K562 (cell line): ENCODE measurements at regions of chr15 and their contacts with region 1.

Region 1: DNA sequence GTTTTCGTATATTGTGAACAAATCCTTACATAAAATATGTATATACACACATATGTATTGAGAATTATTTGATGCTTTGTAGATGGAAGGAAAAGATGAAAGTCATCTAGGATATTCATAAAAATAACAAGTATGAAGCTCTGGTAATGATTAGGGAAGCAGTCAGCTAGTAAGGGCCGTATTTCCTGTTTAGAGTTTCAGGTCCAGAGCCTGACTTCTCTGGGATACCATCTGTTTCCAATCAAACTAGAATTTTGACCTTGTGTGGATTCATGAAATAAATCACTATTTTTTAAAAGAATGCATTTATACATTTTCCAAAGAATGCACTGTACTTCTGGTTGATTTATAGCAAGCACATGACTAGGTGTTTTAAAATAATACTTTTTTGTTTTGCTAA is 156.1 kb upstream of the CGNL1 start:
- DNase-seq: no peak
- ATAC-seq: no peak
- H3K4me3 ChIP-seq: no peak overlapping the region
- H3K27ac ChIP-seq: no peak overlapping the region
- H3K4me1 ChIP-seq: peaks cover 3 to 20% of the 10 kb centered on the region in 2 experiments; a peak in 2 of 5 replicates
- H3K27me3 ChIP-seq: no peaks in the 10 kb centered on the region
- CTCF ChIP-seq: no peak
- EP300 ChIP-seq: no peak
- POLR2A ChIP-seq: no peak
- RAD21 ChIP-seq: no peak

Region 2: DNA sequence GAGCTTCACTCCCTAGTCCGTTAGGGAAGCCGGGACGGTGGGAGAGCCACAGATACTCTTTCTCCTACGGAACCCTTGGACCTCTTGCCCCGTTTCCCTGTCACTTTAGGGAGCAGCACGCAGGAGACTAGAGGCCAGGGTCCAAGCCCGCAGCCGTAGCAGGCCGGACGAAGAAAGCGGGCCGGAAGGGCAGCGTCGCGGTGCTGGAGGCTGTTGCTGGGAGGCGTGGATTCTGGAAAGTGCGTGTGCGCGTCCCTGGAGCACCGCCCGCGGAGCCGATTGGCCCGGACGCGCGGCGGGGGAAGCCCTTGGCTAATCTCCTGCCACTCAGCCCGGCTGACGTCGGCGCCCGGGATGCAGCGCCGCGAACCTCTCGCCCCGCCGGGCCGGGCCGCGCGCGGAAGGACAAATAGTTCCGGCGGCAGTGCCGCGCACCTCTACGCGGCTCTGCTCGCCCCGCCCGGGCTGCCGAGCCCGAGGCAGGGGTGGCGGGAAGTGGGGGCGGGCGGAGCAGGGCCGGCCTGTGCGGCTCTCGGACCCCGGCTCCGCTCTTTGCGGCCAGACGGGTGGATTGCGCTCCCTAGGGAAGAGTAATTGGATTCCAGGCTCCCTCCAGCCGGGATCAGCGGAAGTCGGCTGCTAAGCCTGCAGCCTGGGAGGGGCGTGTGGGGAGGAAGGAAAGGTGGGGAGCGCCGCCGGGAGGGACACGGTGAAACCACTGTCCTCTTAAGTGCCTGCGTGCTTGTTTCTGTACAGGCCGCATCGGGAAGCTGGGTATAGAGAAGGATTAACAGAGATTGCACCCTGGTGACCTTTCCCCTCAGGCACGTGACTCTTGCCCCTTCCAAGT is 333.0 kb before region 1 on chr15:
- CTCF ChIA-PET with region 1: no interaction called
- POLR2A ChIA-PET with region 1: no interaction called
- in situ Hi-C with region 1: no loop called
- intact Hi-C with region 1: loop called (anchors 5 kb)
- DNase-seq: peak; percentile 94 to 95 (median 94)
- ATAC-seq: peak; percentile 97
- H3K4me3 ChIP-seq: peak overlapping the region; percentile 70
- H3K27ac ChIP-seq: peak overlapping the region; percentile 91
- H3K4me1 ChIP-seq: peaks cover 8 to 37% of the 10 kb centered on the region in 2 experiments
- H3K27me3 ChIP-seq: no peaks in the 10 kb centered on the region
- CTCF ChIP-seq: peak in 1 of 3 experiments; percentile 34; a peak in 2 of 6 replicates
- EP300 ChIP-seq: no peak
- POLR2A ChIP-seq: peak; percentile 86
- RAD21 ChIP-seq: peak; percentile 14 to 30; a peak in 2 of 4 replicates

Region 3: GRCh38 chr15:57003418-57003817 is 216.8 kb before region 1 on chr15:
- CTCF ChIA-PET with region 1: no interaction called
- POLR2A ChIA-PET with region 1: no interaction called
- in situ Hi-C with region 1: no loop called
- intact Hi-C with region 1: no loop called
- DNase-seq: no peak
- ATAC-seq: no peak
- H3K4me3 ChIP-seq: no peak overlapping the region
- H3K27ac ChIP-seq: no peak overlapping the region
- H3K4me1 ChIP-seq: no peaks in the 10 kb centered on the region; a peak in 1 of 5 replicates
- H3K27me3 ChIP-seq: no peaks in the 10 kb centered on the region
- CTCF ChIP-seq: no peak
- EP300 ChIP-seq: no peak
- POLR2A ChIP-seq: no peak
- RAD21 ChIP-seq: no peak

Region 4: GRCh38 chr15:57323806-57324589 is 103.8 kb after region 1 on chr15:
- CTCF ChIA-PET with region 1: no interaction called
- POLR2A ChIA-PET with region 1: interaction called, 3 read pairs
- in situ Hi-C with region 1: no loop called
- intact Hi-C with region 1: loop called (anchors 5 kb)
- DNase-seq: peak; percentile 97 to 98 (median 98)
- ATAC-seq: peak; percentile 84
- H3K4me3 ChIP-seq: peak overlapping the region; percentile 28
- H3K27ac ChIP-seq: peak overlapping the region; percentile 99
- H3K4me1 ChIP-seq: peaks cover 56 to 68% of the 10 kb centered on the region in 2 experiments
- H3K27me3 ChIP-seq: no peaks in the 10 kb centered on the region
- CTCF ChIP-seq: no peak
- EP300 ChIP-seq: peak; percentile 46
- POLR2A ChIP-seq: peak; percentile 82
- RAD21 ChIP-seq: no peak